MCF 10A (cell line): ENCODE measurements at regions of chr18 and their contacts with region 1.

Region 1: DNA sequence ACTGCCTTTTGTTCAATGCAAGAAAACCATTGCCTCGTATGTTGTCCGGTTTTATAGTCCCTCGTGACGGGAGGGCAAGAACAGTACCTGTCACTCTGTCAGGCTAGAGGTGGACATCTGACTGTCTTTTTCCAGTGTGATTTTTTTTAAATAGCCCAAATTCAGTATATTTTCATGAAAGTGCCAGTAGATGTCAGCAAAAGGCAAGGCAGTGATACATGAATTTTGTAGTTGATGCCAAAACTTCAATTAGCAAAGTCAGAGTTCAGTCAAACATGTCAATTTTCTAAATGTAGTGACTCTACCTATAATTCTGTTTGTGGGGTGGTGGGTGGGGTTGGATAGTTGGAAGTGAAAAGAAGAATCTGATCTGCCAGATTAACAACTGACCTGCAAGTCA is 296.0 kb upstream of the MC4R start:
- DNase-seq: no peak
- H3K4me3 Mint-ChIP-seq: no peak overlapping the region
- H3K27ac Mint-ChIP-seq: no peak overlapping the region
- H3K4me1 Mint-ChIP-seq: no peaks in the 10 kb centered on the region
- H3K27me3 Mint-ChIP-seq: peaks cover 21% of the 10 kb centered on the region
- CTCF ChIP-seq: peak; percentile 36

Region 2: DNA sequence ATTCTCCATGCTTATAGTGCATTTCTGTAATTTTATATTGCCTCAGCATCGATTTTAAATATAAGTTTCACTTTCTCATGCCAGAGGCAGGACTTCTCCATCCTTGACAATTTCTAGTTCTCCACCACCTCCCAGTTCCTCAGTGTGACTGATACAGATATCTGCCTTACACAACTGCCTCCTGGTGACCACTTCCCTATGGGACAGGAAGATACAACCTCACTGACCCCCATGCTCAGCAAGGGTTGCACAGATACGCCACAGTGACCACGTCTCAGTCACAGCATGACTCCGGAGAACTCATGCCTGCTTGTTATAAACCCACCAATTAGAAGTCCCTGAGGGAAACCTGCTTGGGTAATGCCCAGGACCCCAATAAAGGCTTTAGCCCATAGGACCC is 12.0 kb before region 1 on chr18:
- CTCF ChIA-PET with region 1: interaction called, 11 read pairs
- POLR2A ChIA-PET with region 1: interaction called, 4 read pairs
- intact Hi-C with region 1: no loop called
- DNase-seq: no peak
- H3K4me3 Mint-ChIP-seq: no peak overlapping the region
- H3K27ac Mint-ChIP-seq: no peak overlapping the region
- H3K4me1 Mint-ChIP-seq: no peaks in the 10 kb centered on the region
- H3K27me3 Mint-ChIP-seq: peaks cover 84% of the 10 kb centered on the region
- CTCF ChIP-seq: no peak

Region 3: DNA sequence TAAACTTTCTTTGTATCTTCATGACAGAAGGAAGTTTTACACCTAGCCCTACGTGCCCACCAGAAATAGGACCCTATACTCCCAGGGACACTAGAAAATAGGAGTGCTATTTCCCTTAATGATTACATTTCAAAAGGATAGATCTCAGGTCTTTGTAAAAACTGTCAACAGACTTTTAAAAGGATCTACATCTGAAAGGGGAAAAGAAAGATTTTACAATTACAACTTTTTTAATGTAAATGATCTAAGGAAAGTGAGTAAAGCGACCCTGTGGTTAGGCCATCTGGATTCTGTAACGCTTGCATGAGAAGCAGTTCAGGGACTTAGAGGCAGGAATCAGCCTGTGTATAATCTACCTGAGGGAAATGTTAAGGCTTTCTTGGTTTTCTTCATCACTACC is 135.8 kb after region 1 on chr18:
- CTCF ChIA-PET with region 1: no interaction called
- POLR2A ChIA-PET with region 1: no interaction called
- intact Hi-C with region 1: no loop called
- DNase-seq: no peak
- H3K4me3 Mint-ChIP-seq: no peak overlapping the region
- H3K27ac Mint-ChIP-seq: no peak overlapping the region
- H3K4me1 Mint-ChIP-seq: no peaks in the 10 kb centered on the region
- H3K27me3 Mint-ChIP-seq: peaks cover 18% of the 10 kb centered on the region
- CTCF ChIP-seq: no peak